ENCODE measurements at regions of chr10 and their contacts with region 1.

Region 1: DNA sequence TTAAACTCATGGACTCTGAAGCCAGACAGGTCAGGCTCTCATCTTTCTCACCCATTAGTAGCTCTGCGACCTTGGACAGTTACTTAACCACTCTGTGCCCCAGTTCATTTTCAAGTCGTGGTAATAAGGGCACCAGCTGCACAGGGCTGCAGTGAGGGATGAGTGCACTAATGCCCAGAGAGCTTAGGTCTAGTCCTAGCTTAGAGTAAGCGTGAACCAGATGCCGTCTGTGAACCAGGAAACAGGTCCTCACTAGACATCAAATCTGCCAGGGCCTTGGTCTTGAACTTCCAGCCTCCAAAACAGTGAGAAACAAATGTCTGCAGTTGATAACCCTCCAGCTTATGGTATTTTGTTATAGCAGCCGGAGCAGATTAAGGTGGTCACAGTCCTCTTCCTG is 222.4 kb upstream of the PFKP start:
- DNase-seq: no peak
- ATAC-seq: no peak
- H3K4me3 ChIP-seq: no peak overlapping the region
- H3K27ac ChIP-seq: no peak overlapping the region
- H3K4me1 ChIP-seq: no peaks in the 10 kb centered on the region
- H3K27me3 ChIP-seq: no peaks in the 10 kb centered on the region
- CTCF ChIP-seq: no peak
- POLR2A ChIP-seq: no peak

Region 2: DNA sequence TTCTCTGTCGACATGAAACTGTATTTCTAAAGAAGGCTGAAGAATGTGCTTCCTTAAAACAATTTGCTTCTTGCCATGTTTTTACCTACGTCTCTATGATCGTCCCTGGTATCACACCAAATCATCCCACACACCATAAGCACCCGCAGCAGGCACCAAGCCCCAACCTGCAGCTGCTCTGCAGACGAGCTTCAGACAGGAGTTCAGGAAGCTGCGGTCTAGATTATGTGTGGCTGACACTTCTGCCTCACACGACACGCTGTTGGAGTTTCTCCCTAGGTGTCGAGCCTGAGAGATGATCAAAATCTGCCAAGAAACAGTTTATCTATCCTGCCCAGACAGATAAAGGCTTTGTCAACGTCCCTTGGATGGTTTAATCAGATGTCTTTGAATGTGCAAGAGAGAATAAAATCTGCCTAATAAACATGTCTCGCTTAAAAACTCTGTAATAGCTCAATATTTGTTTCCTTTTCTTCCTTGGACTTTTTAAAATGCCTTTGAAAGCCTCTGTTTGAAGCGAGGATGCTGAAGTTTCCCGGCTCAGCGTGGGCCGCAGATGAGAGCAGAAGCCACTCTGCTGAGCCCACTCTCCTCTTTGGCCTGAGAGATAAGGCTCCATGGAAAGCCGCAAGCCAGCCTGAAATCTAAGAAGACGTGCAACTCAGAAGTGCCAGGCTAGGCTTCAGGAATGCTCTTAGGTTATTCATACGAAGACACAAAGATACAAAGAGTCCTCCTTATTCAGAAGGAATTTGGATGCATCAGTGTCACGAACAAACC is 64.1 kb after region 1 on chr10:
- intact Hi-C with region 1: no loop called
- DNase-seq: no peak
- ATAC-seq: no peak
- H3K4me3 ChIP-seq: no peak overlapping the region
- H3K27ac ChIP-seq: no peak overlapping the region
- H3K4me1 ChIP-seq: peaks cover 8% of the 10 kb centered on the region
- H3K27me3 ChIP-seq: no peaks in the 10 kb centered on the region
- CTCF ChIP-seq: no peak
- POLR2A ChIP-seq: no peak

Region 3: DNA sequence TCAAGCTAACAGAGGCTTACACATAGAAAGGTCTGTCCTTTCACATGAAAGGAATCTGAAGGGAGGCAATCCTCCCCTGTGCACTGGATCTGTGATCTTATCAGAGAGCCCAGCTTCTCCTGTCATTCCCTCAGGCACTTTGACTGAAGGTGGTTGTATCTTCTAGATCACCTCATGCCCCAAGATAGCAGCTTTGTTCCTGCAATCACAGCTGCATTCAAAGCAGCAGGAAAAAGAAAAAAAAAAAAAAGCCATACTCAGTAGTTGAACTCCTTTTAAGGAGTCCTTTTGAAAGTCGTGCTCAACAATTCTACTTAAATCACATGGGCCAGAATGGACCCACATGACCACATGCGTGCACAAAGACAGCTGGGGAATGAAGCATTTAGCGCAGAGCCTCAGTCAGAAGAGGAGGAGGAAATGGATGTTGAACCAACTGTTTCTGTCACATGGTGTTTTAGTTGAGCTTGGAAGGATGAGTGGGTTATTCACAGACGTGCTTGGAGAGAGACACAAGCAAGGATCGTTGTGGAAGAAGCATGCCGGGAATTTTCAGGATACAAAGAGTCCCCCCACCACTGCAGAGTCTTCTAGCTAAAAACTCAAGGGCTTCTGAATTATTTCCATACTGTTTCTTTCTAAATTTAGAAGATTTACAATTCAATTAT is 209.4 kb after region 1 on chr10:
- intact Hi-C with region 1: loop called (anchors 10 kb)
- DNase-seq: no peak
- ATAC-seq: no peak
- H3K4me3 ChIP-seq: no peak overlapping the region
- H3K27ac ChIP-seq: no peak overlapping the region
- H3K4me1 ChIP-seq: no peaks in the 10 kb centered on the region
- H3K27me3 ChIP-seq: no peaks in the 10 kb centered on the region
- CTCF ChIP-seq: no peak
- POLR2A ChIP-seq: no peak

Measured in body of pancreas (tissue), 4 donors.